Activated T-helper 2 cell treated with anti-CD3 and anti-CD28 coated beads, Interferon-gamma antibody, Interleukin-2, Interleukin-4, amounts not matched to agents 10 μg/mL and 5 μg/mL and 100 μg/mL, durations not matched to agents 14 hours and 24 hours and 36 hours (primary cell): ENCODE measurements at regions of chr6 and their contacts with region 1.

Region 1: GRCh38 chr6:17584241-17584803 is 15.8 kb upstream of the FAM8A1 start:
- DNase-seq: no peak
- H3K4me3 Mint-ChIP-seq: no peak overlapping the region
- H3K27ac Mint-ChIP-seq: no peak overlapping the region
- H3K4me1 Mint-ChIP-seq: peaks cover 10% of the 10 kb centered on the region
- H3K27me3 Mint-ChIP-seq: peaks cover 9% of the 10 kb centered on the region

Region 2: GRCh38 chr6:17417817-17418216 is 166.5 kb before region 1 on chr6:
- intact Hi-C with region 1: no loop called
- DNase-seq: no peak
- H3K4me3 Mint-ChIP-seq: no peak overlapping the region
- H3K27ac Mint-ChIP-seq: no peak overlapping the region
- H3K4me1 Mint-ChIP-seq: no peaks in the 10 kb centered on the region
- H3K27me3 Mint-ChIP-seq: no peaks in the 10 kb centered on the region

Region 3: DNA sequence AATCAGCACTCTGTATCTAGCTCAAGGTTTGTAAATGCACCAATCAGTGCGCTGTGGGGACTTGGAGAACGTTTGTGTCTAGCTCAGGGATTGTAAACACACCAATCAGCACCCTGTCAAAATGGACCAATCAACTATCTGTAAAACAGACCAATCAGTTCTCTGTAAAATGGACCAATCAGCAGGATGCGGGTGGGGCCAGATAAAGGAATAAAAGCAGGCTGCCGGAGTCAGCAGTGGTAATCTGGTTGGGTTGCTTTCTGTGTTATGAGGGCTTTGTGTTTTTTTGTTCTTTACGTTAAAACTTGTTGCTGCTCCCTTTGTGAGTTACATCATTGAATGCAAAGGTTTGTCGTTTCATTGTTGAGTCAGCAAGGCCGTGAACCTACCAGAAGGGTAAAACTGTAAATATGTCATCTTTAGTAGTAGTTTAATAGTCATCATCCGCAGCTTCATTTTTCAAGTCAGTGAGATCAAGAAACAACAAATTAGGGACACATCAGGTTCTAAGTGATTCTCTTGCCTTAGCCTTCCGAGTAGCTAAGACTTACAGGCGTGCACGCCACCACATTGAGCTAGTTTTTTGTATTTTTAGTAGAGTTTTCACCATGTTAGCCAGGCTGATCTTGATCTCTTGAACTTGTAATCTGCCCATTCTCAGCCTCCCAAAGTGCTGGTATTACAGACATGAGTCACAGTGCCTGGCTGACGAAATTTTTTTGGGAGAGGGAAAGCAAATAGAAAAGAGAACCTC is 145.2 kb after region 1 on chr6:
- intact Hi-C with region 1: no loop called
- DNase-seq: no peak
- H3K4me3 Mint-ChIP-seq: no peak overlapping the region
- H3K27ac Mint-ChIP-seq: no peak overlapping the region
- H3K4me1 Mint-ChIP-seq: no peaks in the 10 kb centered on the region
- H3K27me3 Mint-ChIP-seq: no peaks in the 10 kb centered on the region

Region 4: GRCh38 chr6:17808609-17809008 is 224.3 kb after region 1 on chr6:
- intact Hi-C with region 1: loop called (anchors 1 kb)
- DNase-seq: no peak
- H3K4me3 Mint-ChIP-seq: no peak overlapping the region
- H3K27ac Mint-ChIP-seq: no peak overlapping the region
- H3K4me1 Mint-ChIP-seq: no peaks in the 10 kb centered on the region
- H3K27me3 Mint-ChIP-seq: peaks cover 13% of the 10 kb centered on the region